ENCODE measurements at regions of chr9 and their contacts with region 1.

Region 1: DNA sequence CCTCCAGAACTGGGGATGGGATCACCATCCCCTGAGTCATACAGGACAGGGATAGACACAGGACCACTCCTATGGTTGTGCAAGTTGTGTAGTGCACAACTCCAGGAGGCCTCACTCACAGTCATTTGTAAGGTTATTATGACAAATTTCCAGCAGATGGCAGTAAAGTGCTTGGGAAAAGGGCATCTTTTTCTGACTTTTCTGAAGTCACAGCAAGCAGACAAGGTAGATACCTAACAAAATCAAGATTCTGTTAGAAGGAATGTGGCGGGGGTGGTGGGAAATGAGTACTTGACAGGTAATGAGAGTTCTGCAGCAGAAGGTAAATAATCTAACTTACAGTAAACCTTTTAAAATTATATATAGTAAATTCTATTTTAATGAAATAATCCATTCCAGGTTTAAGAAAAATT is 16.7 kb upstream of the KIF27 start:
- DNase-seq: peak in 7 of 9 donors; percentile 44 to 74 (median 66)
- ATAC-seq: peak; percentile 84
- H3K4me3 ChIP-seq: no peak overlapping the region
- H3K4me3 Mint-ChIP-seq: no peak overlapping the region
- H3K27ac ChIP-seq: no peak overlapping the region
- H3K27ac Mint-ChIP-seq: no peak overlapping the region
- H3K4me1 ChIP-seq: no peaks in the 10 kb centered on the region
- H3K4me1 Mint-ChIP-seq: peaks cover 0 to 19% (median 0%) of the 10 kb centered on the region in 7 donors
- H3K27me3 ChIP-seq: no peaks in the 10 kb centered on the region
- H3K27me3 Mint-ChIP-seq: no peaks in the 10 kb centered on the region

Region 2: GRCh38 chr9:83538172-83538889 is 399.6 kb before region 1 on chr9 and contains the start of gene FRMD3:
- CTCF ChIA-PET with region 1: no interaction called
- POLR2A ChIA-PET with region 1: no interaction called
- intact Hi-C with region 1: no loop called
- DNase-seq: peak in 2 of 9 donors; percentile 24 to 25
- ATAC-seq: peak; percentile 87
- H3K4me3 ChIP-seq: no peak within 1 kb of the TSS
- H3K4me3 Mint-ChIP-seq: peak within 1 kb of the TSS in 6 of 10 donors; percentile 17 to 64 (median 40)
- H3K27ac ChIP-seq: no peak within 1 kb of the TSS
- H3K27ac Mint-ChIP-seq: no peak within 1 kb of the TSS
- H3K4me1 ChIP-seq: no peaks in the 10 kb centered on the region
- H3K4me1 Mint-ChIP-seq: peaks cover 0 to 6% (median 0%) of the 10 kb centered on the region in 7 donors
- H3K27me3 ChIP-seq: no peaks in the 10 kb centered on the region
- H3K27me3 Mint-ChIP-seq: peaks cover 22 to 58% (median 41%) of the 10 kb centered on the region in 5 donors
- total RNA-seq, gene FRMD3: 0.85 to 2.5 (median 0.92) TPM

Region 3: DNA sequence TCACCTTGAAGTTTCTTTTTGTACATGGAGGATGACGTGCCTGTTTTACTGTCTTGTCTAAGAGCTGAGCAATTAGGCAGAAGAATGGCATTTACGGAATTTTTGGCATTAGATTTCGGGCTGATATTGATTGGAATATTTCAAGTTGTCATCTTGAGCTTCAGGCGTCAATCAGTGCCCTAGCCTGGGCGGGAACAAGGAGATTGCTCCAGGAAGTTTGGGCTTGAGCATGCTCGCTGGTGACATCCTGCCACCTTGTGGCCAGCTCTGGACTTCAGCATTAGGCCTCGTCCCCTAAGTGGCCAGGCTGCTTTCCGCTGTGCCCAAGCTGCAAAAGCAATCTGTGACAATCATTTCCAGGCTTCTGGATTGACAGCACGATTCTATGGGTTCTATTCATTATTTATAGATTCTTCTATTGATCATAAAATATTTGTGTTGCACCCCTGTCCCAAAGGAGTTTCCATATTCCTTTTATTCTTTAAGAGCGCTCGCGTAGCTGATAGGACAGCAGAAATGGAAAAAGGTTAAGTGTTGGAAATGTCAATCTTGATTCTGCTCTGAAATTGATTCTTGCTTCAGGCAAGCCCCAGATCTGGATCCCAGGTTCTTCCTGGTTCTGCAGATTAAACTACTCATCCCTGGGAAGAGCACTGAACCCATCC is 323.3 kb after region 1 on chr9:
- CTCF ChIA-PET with region 1: interaction called, 11 read pairs
- POLR2A ChIA-PET with region 1: interaction called, 3 read pairs
- intact Hi-C with region 1: loop called (anchors 1 kb)
- DNase-seq: peak; percentile 7 to 46 (median 22)
- ATAC-seq: peak; percentile 77
- H3K4me3 ChIP-seq: no peak overlapping the region
- H3K4me3 Mint-ChIP-seq: peak overlapping the region in 5 of 10 donors; percentile 4 to 68 (median 26)
- H3K27ac ChIP-seq: no peak overlapping the region
- H3K27ac Mint-ChIP-seq: no peak overlapping the region
- H3K4me1 ChIP-seq: no peaks in the 10 kb centered on the region
- H3K4me1 Mint-ChIP-seq: peaks cover 0 to 14% (median 4%) of the 10 kb centered on the region in 7 donors
- H3K27me3 ChIP-seq: no peaks in the 10 kb centered on the region
- H3K27me3 Mint-ChIP-seq: peaks cover 0 to 17% (median 0%) of the 10 kb centered on the region in 5 donors

Measured in naive thymus-derived CD4-positive, alpha-beta T cell (primary cell).